ENCODE measurements at regions of chr3 and their contacts with region 1.

Region 1: GRCh38 chr3:128438488-128439072 is 28.1 kb downstream of the DNAJB8 start:
- DNase-seq: no peak
- H3K4me3 ChIP-seq: no peak overlapping the region
- H3K27ac ChIP-seq: no peak overlapping the region
- H3K4me1 ChIP-seq: no peaks in the 10 kb centered on the region
- H3K27me3 ChIP-seq: no peaks in the 10 kb centered on the region
- CTCF ChIP-seq: peak; percentile 37

Region 2: DNA sequence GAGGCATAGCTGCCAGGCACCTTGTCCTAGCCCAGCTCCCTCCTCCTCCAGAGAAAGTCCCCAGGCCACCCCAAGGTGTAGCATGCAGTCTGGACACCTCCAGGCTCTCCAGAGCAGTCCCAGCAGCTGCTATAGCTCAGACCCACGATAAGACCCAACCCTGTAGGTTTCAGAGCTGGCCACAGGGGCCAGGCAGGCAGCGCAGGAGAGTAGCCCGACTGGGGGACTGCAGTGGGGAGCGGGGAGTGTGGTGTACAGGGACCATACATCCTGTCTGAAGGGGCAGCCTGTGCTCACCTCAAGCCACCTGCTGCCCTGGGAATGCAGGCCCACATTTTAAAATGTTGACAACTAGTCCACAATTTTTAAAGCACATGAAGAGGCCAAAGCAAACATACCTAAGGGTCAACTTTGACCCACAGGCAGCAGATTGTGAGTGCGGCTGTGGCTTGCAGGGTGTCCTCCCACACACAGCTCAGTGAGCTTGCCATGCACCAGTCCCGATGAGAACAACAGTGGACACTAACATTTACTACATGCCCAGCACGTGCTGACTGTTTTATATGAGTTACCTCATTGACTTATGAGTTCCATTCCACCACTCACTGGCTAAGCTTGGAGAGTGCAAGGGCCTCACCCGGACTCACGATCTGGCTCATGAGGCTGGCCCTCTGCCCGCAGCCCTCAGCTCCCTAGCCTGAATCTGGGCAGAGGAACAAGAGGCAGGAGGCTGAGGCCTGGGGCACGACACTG is 53.3 kb before region 1 on chr3:
- CTCF ChIA-PET with region 1: no interaction called
- dilution Hi-C with region 1: loop called (anchors 5 kb)
- in situ Hi-C with region 1: no loop called
- intact Hi-C with region 1: no loop called
- DNase-seq: no peak
- H3K4me3 ChIP-seq: no peak overlapping the region
- H3K27ac ChIP-seq: no peak overlapping the region
- H3K4me1 ChIP-seq: peaks cover 8% of the 10 kb centered on the region
- H3K27me3 ChIP-seq: no peaks in the 10 kb centered on the region
- CTCF ChIP-seq: no peak

Region 3: DNA sequence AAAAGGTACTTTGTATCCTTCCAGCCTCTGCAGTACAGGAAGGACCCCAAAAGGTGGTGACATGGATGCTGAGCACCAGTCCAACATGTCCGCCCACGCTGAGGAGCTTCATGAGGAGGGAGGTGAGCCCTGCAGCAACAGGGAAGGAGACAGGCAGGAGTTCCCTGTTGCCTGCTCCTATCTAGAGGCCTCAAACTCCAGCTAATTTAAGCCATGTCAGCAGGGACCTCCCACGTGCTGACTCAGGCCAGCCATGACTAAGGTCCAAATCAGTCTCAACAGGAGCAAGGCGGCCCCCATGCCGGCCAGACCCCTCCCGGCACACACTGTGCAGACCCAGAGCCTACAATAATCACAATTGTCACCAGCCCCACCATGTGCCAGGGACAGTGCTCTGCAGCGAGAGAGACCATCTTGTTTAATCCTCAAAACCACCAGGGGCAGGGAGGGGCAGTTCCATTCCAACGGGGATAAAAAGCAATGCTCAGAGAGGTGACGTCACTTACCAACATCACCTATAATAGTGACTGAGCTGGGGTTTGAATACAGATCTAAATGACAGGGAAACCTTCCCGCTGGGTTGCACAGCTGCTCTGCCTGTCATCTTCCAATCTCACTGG is 108.9 kb after region 1 on chr3:
- CTCF ChIA-PET with region 1: no interaction called
- dilution Hi-C with region 1: no loop called
- in situ Hi-C with region 1: no loop called
- intact Hi-C with region 1: no loop called
- DNase-seq: peak; percentile 55
- H3K4me3 ChIP-seq: no peak overlapping the region
- H3K27ac ChIP-seq: no peak overlapping the region
- H3K4me1 ChIP-seq: peaks cover 14% of the 10 kb centered on the region
- H3K27me3 ChIP-seq: no peaks in the 10 kb centered on the region
- CTCF ChIP-seq: no peak